Right ventricle myocardium inferior (tissue), 1 donor: ENCODE measurements at regions of chr2 and their contacts with region 1.

Region 1: GRCh38 chr2:66439812-66440542 is 5.1 kb downstream of the MEIS1 start:
- DNase-seq: no peak
- ATAC-seq: no peak

Region 2: GRCh38 chr2:66408905-66409304 is 31.1 kb before region 1 on chr2:
- intact Hi-C with region 1: no loop called
- DNase-seq: no peak
- ATAC-seq: no peak

Region 3: GRCh38 chr2:66477135-66477842 is 37.3 kb after region 1 on chr2:
- intact Hi-C with region 1: loop called (anchors 5 kb)
- DNase-seq: no peak
- ATAC-seq: peak; percentile 30